CD8-positive, alpha-beta T cell (primary cell): ENCODE measurements at regions of chr15 and their contacts with region 1.

Region 1: DNA sequence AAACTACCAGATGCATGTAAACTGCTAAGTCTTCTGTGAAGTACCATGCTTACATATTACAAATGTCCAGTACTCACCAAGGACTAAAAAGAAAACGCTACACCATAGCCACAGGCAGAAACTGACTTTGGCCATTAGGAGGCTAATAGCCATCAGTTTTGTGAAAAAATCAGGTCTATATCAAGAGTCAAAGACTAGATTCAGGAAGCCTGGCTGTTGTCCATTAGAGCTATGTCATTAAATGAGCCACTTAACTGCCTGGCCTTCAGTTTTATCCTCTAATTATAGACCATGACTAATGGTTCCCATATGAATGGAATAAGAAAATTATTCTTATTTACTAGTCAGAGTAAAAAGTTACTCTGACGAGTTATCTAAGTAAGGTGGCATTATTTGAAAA is 144.1 kb downstream of the VPS13C start:
- DNase-seq: no peak
- ATAC-seq: no peak
- H3K4me3 ChIP-seq: no peak overlapping the region
- H3K4me3 Mint-ChIP-seq: no peak overlapping the region
- H3K27ac ChIP-seq: no peak overlapping the region
- H3K27ac Mint-ChIP-seq: no peak overlapping the region
- H3K4me1 ChIP-seq: no peaks in the 10 kb centered on the region
- H3K4me1 Mint-ChIP-seq: no peaks in the 10 kb centered on the region
- H3K27me3 ChIP-seq: no peaks in the 10 kb centered on the region
- H3K27me3 Mint-ChIP-seq: no peaks in the 10 kb centered on the region
- CTCF ChIP-seq: no peak

Region 2: GRCh38 chr15:61824291-61824690 is 91.8 kb before region 1 on chr15:
- CTCF ChIA-PET with region 1: no interaction called
- POLR2A ChIA-PET with region 1: no interaction called
- intact Hi-C with region 1: no loop called
- DNase-seq: no peak
- ATAC-seq: no peak
- H3K4me3 ChIP-seq: no peak overlapping the region
- H3K4me3 Mint-ChIP-seq: no peak overlapping the region
- H3K27ac ChIP-seq: no peak overlapping the region
- H3K27ac Mint-ChIP-seq: no peak overlapping the region
- H3K4me1 ChIP-seq: no peaks in the 10 kb centered on the region
- H3K4me1 Mint-ChIP-seq: no peaks in the 10 kb centered on the region
- H3K27me3 ChIP-seq: no peaks in the 10 kb centered on the region
- H3K27me3 Mint-ChIP-seq: peaks cover 24% of the 10 kb centered on the region
- CTCF ChIP-seq: no peak

Region 3: GRCh38 chr15:61935493-61935892 is 19.4 kb after region 1 on chr15:
- CTCF ChIA-PET with region 1: interaction called, 3 read pairs
- POLR2A ChIA-PET with region 1: no interaction called
- intact Hi-C with region 1: loop called in 1 of 2 experiments (anchors 2 kb)
- DNase-seq: no peak
- ATAC-seq: no peak
- H3K4me3 ChIP-seq: no peak overlapping the region
- H3K4me3 Mint-ChIP-seq: no peak overlapping the region
- H3K27ac ChIP-seq: no peak overlapping the region
- H3K27ac Mint-ChIP-seq: no peak overlapping the region
- H3K4me1 ChIP-seq: no peaks in the 10 kb centered on the region
- H3K4me1 Mint-ChIP-seq: no peaks in the 10 kb centered on the region
- H3K27me3 ChIP-seq: no peaks in the 10 kb centered on the region
- H3K27me3 Mint-ChIP-seq: no peaks in the 10 kb centered on the region
- CTCF ChIP-seq: no peak

Region 4: GRCh38 chr15:61974759-61975158 is 58.7 kb after region 1 on chr15:
- CTCF ChIA-PET with region 1: no interaction called
- POLR2A ChIA-PET with region 1: no interaction called
- intact Hi-C with region 1: loop called in 1 of 2 experiments (anchors 10 kb)
- DNase-seq: no peak
- ATAC-seq: no peak
- H3K4me3 ChIP-seq: no peak overlapping the region
- H3K4me3 Mint-ChIP-seq: no peak overlapping the region
- H3K27ac ChIP-seq: no peak overlapping the region
- H3K27ac Mint-ChIP-seq: peak overlapping the region; percentile 7
- H3K4me1 ChIP-seq: no peaks in the 10 kb centered on the region
- H3K4me1 Mint-ChIP-seq: peaks cover 14% of the 10 kb centered on the region
- H3K27me3 ChIP-seq: no peaks in the 10 kb centered on the region
- H3K27me3 Mint-ChIP-seq: no peaks in the 10 kb centered on the region
- CTCF ChIP-seq: no peak